CD8-positive, alpha-beta T cell (primary cell): ENCODE measurements at regions of chr14 and their contacts with region 1.

Region 1: DNA sequence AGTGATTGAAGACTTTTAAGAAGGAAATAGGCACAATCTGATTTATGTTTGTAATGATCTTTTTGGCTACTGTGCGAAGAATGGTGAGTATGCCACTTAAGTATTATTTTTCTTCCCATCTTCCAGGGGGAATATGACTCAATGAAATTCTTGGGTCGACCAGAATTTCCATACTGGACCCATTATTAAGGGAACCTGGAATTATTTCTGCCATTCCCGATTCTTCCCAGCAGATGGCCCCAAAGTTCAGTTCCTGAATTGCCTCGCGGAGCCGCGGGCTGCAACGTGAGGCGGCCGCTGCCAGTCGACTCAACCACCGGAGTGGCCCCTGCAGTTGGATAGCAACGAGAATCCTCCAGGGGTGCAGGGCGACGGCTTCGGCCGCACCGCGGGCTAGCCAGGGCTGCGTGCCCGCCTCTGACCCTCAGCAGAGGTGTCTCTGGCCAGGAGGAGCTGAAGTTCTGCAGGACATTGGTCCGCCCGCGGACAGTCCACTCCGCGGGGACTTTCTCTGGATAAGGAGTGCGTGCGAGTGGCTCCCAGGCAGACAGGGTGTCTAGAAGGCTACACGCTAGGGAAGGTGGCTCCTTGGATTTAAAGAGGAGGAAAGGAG is 628 bp upstream of the TSHR start:
- DNase-seq: peak; percentile 52 to 83 (median 76)
- ATAC-seq: peak; percentile 67
- H3K4me3 ChIP-seq: peak overlapping the region; percentile 60 to 72
- H3K4me3 Mint-ChIP-seq: peak overlapping the region; percentile 87
- H3K27ac ChIP-seq: no peak overlapping the region
- H3K27ac Mint-ChIP-seq: no peak overlapping the region
- H3K4me1 ChIP-seq: peaks cover 6% of the 10 kb centered on the region
- H3K4me1 Mint-ChIP-seq: peaks cover 35% of the 10 kb centered on the region
- H3K27me3 ChIP-seq: no peaks in the 10 kb centered on the region
- H3K27me3 Mint-ChIP-seq: no peaks in the 10 kb centered on the region
- CTCF ChIP-seq: peak; percentile 73

Region 2: GRCh38 chr14:80973931-80974641 is 19.3 kb after region 1 on chr14:
- CTCF ChIA-PET with region 1: interaction called, 10 read pairs
- POLR2A ChIA-PET with region 1: no interaction called
- intact Hi-C with region 1: no loop called
- DNase-seq: peak in 2 of 9 experiments; percentile 38 to 50
- ATAC-seq: peak; percentile 73
- H3K4me3 ChIP-seq: no peak overlapping the region
- H3K4me3 Mint-ChIP-seq: no peak overlapping the region
- H3K27ac ChIP-seq: no peak overlapping the region
- H3K27ac Mint-ChIP-seq: peak overlapping the region; percentile 24
- H3K4me1 ChIP-seq: no peaks in the 10 kb centered on the region
- H3K4me1 Mint-ChIP-seq: peaks cover 11% of the 10 kb centered on the region
- H3K27me3 ChIP-seq: no peaks in the 10 kb centered on the region
- H3K27me3 Mint-ChIP-seq: peaks cover 2% of the 10 kb centered on the region
- CTCF ChIP-seq: no peak

Region 3: DNA sequence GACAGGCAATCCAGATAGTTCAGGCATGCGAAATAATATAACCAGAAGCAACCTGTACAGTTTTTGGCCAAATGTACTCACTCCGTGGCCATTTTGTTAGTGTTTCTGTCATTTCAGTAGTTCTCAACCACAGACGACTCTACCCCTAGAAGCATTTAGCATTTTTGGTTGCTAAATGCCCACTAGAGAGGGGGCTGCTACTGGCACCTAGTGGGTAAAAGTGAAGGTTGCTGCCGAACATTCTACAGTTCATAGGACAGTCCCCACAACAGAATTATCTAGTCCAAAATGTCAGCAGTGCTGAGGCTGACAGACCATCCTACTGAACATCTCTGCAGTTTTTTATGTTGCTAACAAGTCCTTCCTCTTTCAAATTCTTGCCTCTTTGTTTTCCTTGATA is 108.0 kb after region 1 on chr14:
- CTCF ChIA-PET with region 1: no interaction called
- POLR2A ChIA-PET with region 1: no interaction called
- intact Hi-C with region 1: loop called in 1 of 2 experiments (anchors 2 kb)
- DNase-seq: peak in 3 of 9 experiments; percentile 19 to 33 (median 20)
- ATAC-seq: no peak
- H3K4me3 ChIP-seq: no peak overlapping the region
- H3K4me3 Mint-ChIP-seq: no peak overlapping the region
- H3K27ac ChIP-seq: no peak overlapping the region
- H3K27ac Mint-ChIP-seq: no peak overlapping the region
- H3K4me1 ChIP-seq: no peaks in the 10 kb centered on the region
- H3K4me1 Mint-ChIP-seq: no peaks in the 10 kb centered on the region
- H3K27me3 ChIP-seq: no peaks in the 10 kb centered on the region
- H3K27me3 Mint-ChIP-seq: peaks cover 3% of the 10 kb centered on the region
- CTCF ChIP-seq: peak; percentile 32

Region 4: DNA sequence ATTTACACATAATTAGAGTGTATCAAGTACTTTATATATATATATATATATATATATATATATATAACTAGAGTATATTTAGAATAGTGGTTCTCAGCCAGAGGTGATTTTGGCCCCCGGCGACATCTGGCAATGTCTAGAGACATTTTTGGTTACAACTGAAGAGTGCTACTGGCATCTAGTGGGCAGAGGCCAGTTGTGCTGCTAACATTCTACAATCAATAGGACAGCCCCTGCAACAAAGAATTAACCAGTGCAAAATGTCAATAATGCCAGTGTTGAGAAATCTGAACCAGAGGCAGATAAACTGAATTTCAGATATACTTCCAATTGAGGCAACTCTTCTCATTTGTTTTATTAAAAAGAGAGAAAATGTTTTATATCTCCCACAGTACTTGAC is 257.1 kb after region 1 on chr14:
- CTCF ChIA-PET with region 1: no interaction called
- POLR2A ChIA-PET with region 1: no interaction called
- intact Hi-C with region 1: loop called (anchors 2 kb)
- DNase-seq: peak in 5 of 9 experiments; percentile 19 to 61 (median 33)
- ATAC-seq: peak; percentile 84
- H3K4me3 ChIP-seq: no peak overlapping the region
- H3K4me3 Mint-ChIP-seq: no peak overlapping the region
- H3K27ac ChIP-seq: no peak overlapping the region
- H3K27ac Mint-ChIP-seq: peak overlapping the region; percentile 16
- H3K4me1 ChIP-seq: peaks cover 13% of the 10 kb centered on the region
- H3K4me1 Mint-ChIP-seq: peaks cover 60% of the 10 kb centered on the region
- H3K27me3 ChIP-seq: no peaks in the 10 kb centered on the region
- H3K27me3 Mint-ChIP-seq: no peaks in the 10 kb centered on the region
- CTCF ChIP-seq: peak; percentile 38

Region 5: DNA sequence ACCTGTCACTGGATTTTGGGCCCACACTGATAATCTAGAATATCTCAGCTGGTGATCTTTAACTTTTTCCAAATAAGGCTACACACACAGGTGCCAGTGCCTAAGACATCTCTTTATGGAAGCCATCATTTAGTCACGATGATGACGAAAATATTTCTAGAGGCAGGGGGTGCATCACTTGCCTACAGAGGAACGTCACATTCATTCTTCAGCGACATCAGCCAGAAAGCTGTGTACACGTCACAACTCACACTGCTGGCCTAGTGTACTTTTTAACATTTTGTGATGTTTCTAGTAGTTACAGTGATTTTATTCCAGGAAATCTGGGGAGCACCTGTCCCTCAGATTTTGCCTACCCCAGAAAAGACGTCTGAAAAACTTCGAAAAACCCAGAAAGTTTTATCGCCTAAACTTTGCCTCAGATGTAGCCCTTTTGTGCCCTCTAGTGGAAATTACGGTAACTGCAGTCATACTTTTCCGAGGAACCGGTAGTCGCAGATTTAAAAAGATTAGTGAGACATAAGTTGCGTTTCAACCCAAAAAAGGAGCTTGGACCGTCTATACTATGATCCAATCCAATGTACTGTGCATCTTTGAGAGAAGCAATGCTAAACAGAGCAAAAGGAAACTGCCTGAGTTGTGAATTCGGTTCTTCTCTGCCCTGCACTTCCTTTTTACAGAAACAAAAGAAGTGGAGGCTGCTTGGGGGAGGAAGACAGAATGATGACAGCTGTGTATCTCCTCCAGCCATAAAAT is 509.6 kb after region 1 on chr14:
- CTCF ChIA-PET with region 1: interaction called, 9 read pairs
- POLR2A ChIA-PET with region 1: no interaction called
- intact Hi-C with region 1: loop called (anchors 1 to 5 kb)
- DNase-seq: peak; percentile 26 to 84 (median 58)
- ATAC-seq: peak; percentile 81
- H3K4me3 ChIP-seq: peak overlapping the region; percentile 63 to 68
- H3K4me3 Mint-ChIP-seq: peak overlapping the region; percentile 86
- H3K27ac ChIP-seq: peak overlapping the region; percentile 55 to 86
- H3K27ac Mint-ChIP-seq: peak overlapping the region; percentile 87
- H3K4me1 ChIP-seq: no peaks in the 10 kb centered on the region
- H3K4me1 Mint-ChIP-seq: peaks cover 10% of the 10 kb centered on the region
- H3K27me3 ChIP-seq: no peaks in the 10 kb centered on the region
- H3K27me3 Mint-ChIP-seq: no peaks in the 10 kb centered on the region
- CTCF ChIP-seq: peak; percentile 95

Region 6: GRCh38 chr14:81478446-81478845 is 523.7 kb after region 1 on chr14:
- CTCF ChIA-PET with region 1: no interaction called
- POLR2A ChIA-PET with region 1: no interaction called
- intact Hi-C with region 1: no loop called
- DNase-seq: no peak
- ATAC-seq: no peak
- H3K4me3 ChIP-seq: no peak overlapping the region
- H3K4me3 Mint-ChIP-seq: no peak overlapping the region
- H3K27ac ChIP-seq: no peak overlapping the region
- H3K27ac Mint-ChIP-seq: peak overlapping the region; percentile 39
- H3K4me1 ChIP-seq: peaks cover 18% of the 10 kb centered on the region
- H3K4me1 Mint-ChIP-seq: peaks cover 27% of the 10 kb centered on the region
- H3K27me3 ChIP-seq: no peaks in the 10 kb centered on the region
- H3K27me3 Mint-ChIP-seq: no peaks in the 10 kb centered on the region
- CTCF ChIP-seq: no peak